BJ (cell line): ENCODE measurements at regions of chr16 and their contacts with region 1.

Region 1: DNA sequence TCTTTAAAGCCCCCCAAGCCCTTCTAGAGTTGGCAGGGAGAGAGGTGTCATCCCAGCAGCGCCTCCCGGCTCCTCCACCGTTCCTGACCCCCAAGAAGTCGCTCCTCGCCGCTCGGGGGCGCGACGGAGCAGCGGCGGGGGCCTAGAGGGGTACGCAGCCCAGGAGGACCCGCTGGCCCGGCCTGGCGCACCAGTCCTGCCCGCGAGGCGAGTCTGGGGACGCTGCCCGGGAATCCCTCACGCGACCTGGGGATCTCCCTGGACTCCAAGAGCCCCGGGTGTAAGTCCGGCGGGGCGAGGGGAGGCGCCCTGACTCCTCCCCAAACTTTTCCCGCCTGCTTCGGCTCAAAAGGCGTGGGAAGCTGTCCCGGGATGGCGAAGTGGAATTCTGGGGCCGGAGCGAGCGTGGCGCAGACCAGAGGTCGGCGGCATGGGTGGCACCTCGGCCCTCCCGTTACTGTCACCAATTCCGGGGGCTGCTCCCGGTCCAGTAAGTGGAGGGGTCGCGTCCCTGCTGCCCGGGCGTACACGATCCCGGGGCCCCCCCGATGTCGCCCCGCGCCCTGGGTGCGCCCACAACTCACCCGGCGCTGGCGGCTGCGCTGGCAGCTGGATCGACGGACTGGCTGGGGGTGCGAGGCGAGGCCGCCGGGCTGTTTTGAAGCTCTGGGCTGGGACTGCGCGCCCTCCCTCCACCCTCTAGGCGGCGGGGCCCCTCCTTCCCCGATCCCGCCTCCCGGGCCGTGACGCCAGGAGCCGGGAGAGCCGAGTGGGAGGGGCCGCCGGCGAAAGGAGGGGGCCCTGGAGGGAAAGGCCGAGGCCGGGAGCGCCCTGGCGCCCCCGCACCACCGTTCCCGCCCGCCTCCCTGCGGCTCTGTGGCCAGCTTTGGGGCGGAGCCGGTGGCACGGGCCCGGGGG is at the start of gene EMP2:
- DNase-seq: no peak
- H3K4me3 ChIP-seq: peak within 1 kb of the TSS; percentile 90
- H3K27me3 ChIP-seq: no peaks in the 10 kb centered on the region
- CTCF ChIP-seq: peak; percentile 76
- polyA plus RNA-seq, gene EMP2: 44.6 and 57.8 TPM in 2 replicates

Region 2: DNA sequence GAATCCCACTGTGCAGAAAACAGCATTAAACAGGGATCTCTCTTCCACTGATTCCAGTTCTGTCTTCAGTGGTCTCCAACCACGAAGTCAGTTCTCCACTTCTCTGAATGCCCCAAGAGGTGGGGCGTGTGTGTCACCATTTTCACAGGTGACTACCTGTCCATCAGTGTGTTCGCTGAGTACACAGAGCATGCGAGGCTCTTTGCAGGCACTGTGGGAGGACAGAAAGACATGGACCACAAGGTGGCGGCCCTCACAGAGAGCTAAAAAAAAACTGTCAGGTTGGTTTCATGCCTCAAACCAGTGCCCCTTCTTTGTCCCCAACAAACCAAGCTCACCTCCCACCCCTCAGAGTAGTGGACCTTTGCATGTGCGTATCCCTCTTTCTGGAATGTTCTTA is 13.6 kb before region 1 on chr16:
- CTCF ChIA-PET with region 1: interaction called, 13 read pairs
- POLR2A ChIA-PET with region 1: interaction called, 5 read pairs
- DNase-seq: no peak
- H3K4me3 ChIP-seq: no peak overlapping the region
- H3K27me3 ChIP-seq: no peaks in the 10 kb centered on the region
- CTCF ChIP-seq: no peak